GM12878 (cell line): ENCODE measurements at regions of chr16 and their contacts with region 1.

Region 1: GRCh38 chr16:68470461-68471150 is 22.3 kb upstream of the SMPD3 start:
- DNase-seq: peak; percentile 94
- ATAC-seq: peak; percentile 98
- H3K4me3 ChIP-seq: peak overlapping the region; percentile 65; the same call in 1 of the 2 replicates
- H3K27ac ChIP-seq: peak overlapping the region; percentile 96
- H3K4me1 ChIP-seq: peaks cover 57% of the 10 kb centered on the region
- H3K27me3 ChIP-seq: no peaks in the 10 kb centered on the region
- CTCF ChIP-seq: no peak
- EP300 ChIP-seq: peak; percentile 44 to 86; a peak in 2 of 4 replicates
- POLR2A ChIP-seq: peak; percentile 74
- RAD21 ChIP-seq: no peak

Region 2: DNA sequence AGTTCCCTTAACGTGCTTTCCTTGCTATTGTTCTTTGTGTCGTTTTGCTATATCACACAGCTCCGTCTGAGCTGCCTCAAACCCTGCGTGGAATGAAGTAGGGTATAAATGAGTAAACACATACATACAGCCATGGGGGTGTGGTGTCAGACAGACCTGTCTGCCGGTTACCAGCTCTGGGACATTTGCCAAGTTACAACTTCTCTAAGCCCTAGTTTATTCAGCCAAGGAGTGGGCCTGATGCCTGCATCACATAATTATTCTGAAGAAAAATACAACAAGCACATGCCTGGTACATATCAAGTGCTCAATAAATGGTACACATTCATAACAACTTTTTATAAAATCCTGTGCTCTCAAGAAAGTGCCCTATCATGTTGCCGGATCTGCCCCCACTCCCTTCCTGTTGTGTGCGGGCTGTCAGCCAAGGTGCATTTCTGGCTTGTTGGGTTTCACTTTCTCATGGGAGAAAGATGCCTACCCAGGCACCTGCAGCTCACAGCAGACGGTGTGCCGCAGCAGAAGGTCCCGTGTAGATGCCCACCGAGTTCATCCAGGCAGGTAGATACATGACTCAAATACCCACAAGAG is 52.8 kb before region 1 on chr16:
- CTCF ChIA-PET with region 1: interaction called, 5 read pairs
- POLR2A ChIA-PET with region 1: interaction called, 3 read pairs
- RAD21 ChIA-PET with region 1: interaction called, 11 read pairs
- SMC1A ChIA-PET with region 1: interaction called, 9 read pairs
- in situ Hi-C with region 1: no loop called
- intact Hi-C with region 1: no loop called
- DNase-seq: peak; percentile 73
- ATAC-seq: peak; percentile 93
- H3K4me3 ChIP-seq: peak overlapping the region; percentile 16; the same call in 1 of the 2 replicates
- H3K27ac ChIP-seq: peak overlapping the region; percentile 70
- H3K4me1 ChIP-seq: peaks cover 25% of the 10 kb centered on the region
- H3K27me3 ChIP-seq: no peaks in the 10 kb centered on the region
- CTCF ChIP-seq: no peak
- EP300 ChIP-seq: no peak
- POLR2A ChIP-seq: peak; percentile 24; the same call in 1 of the 2 replicates
- RAD21 ChIP-seq: no peak

Region 3: GRCh38 chr16:68458551-68458950 is 12.1 kb before region 1 on chr16:
- CTCF ChIA-PET with region 1: interaction called, 6 read pairs
- POLR2A ChIA-PET with region 1: no interaction called
- RAD21 ChIA-PET with region 1: interaction called, 3 read pairs
- SMC1A ChIA-PET with region 1: interaction called, 10 read pairs
- in situ Hi-C with region 1: no loop called
- intact Hi-C with region 1: no loop called
- DNase-seq: no peak
- ATAC-seq: no peak
- H3K4me3 ChIP-seq: no peak overlapping the region
- H3K27ac ChIP-seq: no peak overlapping the region
- H3K4me1 ChIP-seq: no peaks in the 10 kb centered on the region
- H3K27me3 ChIP-seq: no peaks in the 10 kb centered on the region
- CTCF ChIP-seq: no peak
- EP300 ChIP-seq: no peak
- POLR2A ChIP-seq: no peak
- RAD21 ChIP-seq: no peak

Region 4: DNA sequence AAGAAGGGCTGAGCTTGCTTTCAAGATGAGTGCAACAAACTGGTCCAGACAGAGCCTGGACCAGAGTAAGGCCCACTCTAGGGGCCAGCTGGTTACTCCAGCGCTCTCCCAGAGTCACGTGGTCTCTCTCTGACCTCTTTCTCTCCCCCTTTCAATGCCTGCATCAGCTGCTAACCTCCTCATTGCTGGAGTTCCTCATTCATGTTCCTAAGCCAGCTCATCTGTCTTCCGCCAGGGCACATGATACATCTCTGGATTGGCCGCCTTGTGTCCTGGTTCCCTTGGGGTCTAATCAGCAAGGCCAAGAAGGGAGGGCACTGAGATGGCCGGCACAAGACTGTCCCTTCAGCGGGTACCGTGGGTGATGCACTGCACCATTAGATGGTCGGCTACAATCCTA is 41.6 kb after region 1 on chr16:
- CTCF ChIA-PET with region 1: interaction called, 17 read pairs
- POLR2A ChIA-PET with region 1: no interaction called
- RAD21 ChIA-PET with region 1: interaction called, 6 read pairs
- SMC1A ChIA-PET with region 1: no interaction called
- in situ Hi-C with region 1: no loop called
- intact Hi-C with region 1: loop called (anchors 1 kb)
- DNase-seq: no peak
- ATAC-seq: no peak
- H3K4me3 ChIP-seq: no peak overlapping the region
- H3K27ac ChIP-seq: no peak overlapping the region
- H3K4me1 ChIP-seq: no peaks in the 10 kb centered on the region
- H3K27me3 ChIP-seq: no peaks in the 10 kb centered on the region; a peak in 2 of 4 replicates
- CTCF ChIP-seq: no peak
- EP300 ChIP-seq: no peak
- POLR2A ChIP-seq: no peak
- RAD21 ChIP-seq: no peak

Region 5: DNA sequence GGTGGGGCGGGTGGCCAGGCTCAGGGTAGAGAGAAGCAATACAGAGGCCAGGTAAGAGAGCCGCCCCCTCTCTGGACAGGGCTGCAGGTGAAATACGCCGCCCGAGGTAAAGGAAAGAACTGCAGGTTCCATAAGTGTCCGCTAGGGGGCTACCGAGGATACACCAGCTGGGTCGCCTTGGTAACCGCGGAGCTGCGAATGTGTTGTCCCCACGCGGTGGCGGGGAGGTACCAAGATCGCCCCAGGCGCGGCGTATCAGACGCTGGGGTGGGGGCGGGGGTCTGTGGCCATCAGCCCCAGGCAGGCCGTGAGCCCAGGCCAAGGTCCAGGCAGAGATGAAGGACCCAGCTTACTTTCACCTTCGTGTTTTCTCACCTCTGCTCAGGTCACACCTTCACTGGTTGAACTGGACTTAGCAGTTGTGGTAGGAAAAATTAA is 50.1 kb after region 1 on chr16:
- CTCF ChIA-PET with region 1: interaction called, 26 read pairs
- POLR2A ChIA-PET with region 1: no interaction called
- RAD21 ChIA-PET with region 1: no interaction called
- SMC1A ChIA-PET with region 1: interaction called, 5 read pairs
- in situ Hi-C with region 1: no loop called
- intact Hi-C with region 1: no loop called
- DNase-seq: no peak
- ATAC-seq: peak; percentile 98
- H3K4me3 ChIP-seq: no peak overlapping the region
- H3K27ac ChIP-seq: no peak overlapping the region
- H3K4me1 ChIP-seq: no peaks in the 10 kb centered on the region; the same call in 1 of the 2 replicates
- H3K27me3 ChIP-seq: no peaks in the 10 kb centered on the region; a peak in 1 of 4 replicates
- CTCF ChIP-seq: peak; percentile 99 to 100 (median 100); a peak in 5 of 6 replicates
- EP300 ChIP-seq: peak in 1 of 2 experiments; percentile 25; a peak in 1 of 4 replicates
- POLR2A ChIP-seq: no peak
- RAD21 ChIP-seq: peak; percentile 55